Activated CD4-positive, alpha-beta memory T cell treated with anti-CD3 and anti-CD28 coated beads, Interleukin-2, amount 10 ng/mL, durations not matched to agents 7 days and 5 days (primary cell): ENCODE measurements at regions of chr11 and their contacts with region 1.

Region 1: DNA sequence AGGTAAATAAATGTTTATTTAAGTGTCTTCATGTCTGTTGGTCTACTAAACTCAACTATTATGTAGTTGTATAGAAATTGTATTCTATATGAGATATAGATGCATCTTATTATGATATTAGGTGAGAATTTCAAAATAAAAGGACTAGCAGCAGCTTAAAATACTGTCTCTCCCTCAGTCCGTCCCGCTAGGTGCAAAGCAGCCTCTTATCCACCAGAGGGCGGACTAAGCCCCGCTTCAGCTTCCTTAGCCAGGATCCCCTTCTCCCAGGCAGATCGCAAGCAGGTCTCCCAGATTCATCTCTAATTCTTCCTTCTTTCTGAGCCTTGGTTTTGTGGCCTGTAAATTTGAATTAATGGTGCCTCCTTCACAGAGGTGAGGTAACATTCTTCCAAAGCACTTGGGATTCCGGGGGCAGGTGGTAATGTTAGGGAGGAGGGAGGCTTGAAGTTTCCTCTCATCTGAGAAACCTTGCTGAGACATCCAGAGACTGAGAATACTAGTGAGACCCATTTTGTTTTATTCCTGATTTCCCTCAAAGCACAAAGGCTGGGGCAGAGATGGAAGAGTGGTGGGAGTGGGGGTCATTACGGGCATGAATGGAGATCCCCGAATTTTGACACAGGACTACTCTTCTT is 13.5 kb upstream of the INSC start:
- DNase-seq: peak; percentile 62
- H3K4me3 Mint-ChIP-seq: no peak overlapping the region
- H3K27ac Mint-ChIP-seq: no peak overlapping the region
- H3K4me1 Mint-ChIP-seq: peaks cover 2% of the 10 kb centered on the region
- H3K27me3 Mint-ChIP-seq: peaks cover 33% of the 10 kb centered on the region

Region 2: DNA sequence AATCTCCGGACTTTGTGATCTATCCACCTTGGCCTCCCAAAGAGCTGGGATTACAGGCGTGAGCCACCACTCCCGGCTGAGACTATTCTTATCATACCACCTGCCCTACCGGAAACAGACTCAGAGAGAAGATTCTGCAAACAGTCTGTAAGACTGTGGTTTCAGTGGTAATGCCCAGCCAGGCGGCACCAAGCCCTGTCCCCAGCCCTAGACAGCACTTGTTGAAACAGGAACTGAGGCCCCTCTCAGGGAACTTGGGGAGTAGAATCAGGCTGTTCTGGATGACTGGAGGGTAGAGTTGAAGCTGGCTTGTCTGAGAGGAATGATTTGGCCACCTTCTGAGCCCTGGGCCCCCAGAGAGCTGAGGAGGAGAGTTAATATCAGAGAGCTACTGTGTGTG is 12.2 kb after region 1 on chr11:
- CTCF ChIA-PET with region 1: interaction called, 12 read pairs
- POLR2A ChIA-PET with region 1: no interaction called
- DNase-seq: peak; percentile 28
- H3K4me3 Mint-ChIP-seq: no peak overlapping the region
- H3K27ac Mint-ChIP-seq: no peak overlapping the region
- H3K4me1 Mint-ChIP-seq: peaks cover 24% of the 10 kb centered on the region
- H3K27me3 Mint-ChIP-seq: peaks cover 25% of the 10 kb centered on the region

Region 3: DNA sequence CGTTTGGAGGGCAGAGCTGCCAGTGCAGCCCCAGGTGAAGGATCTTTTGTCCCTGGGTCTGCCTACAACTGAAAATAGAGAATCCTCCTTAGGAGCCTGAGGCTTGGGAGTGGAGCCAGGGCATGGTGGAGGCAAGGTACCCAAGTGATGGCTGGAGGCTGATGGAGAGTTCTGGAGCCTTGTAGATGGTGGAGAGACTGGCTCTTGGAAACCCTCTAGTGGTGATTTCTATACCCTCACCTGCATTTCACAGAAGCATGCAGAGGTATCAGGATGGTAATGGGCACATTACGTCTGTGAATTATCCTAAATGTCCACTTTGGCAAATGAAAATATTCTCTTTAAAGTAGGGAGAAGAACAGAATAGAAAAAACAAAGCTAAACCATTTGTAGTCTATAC is 57.9 kb after region 1 on chr11:
- CTCF ChIA-PET with region 1: interaction called, 30 read pairs
- POLR2A ChIA-PET with region 1: no interaction called
- DNase-seq: no peak
- H3K4me3 Mint-ChIP-seq: no peak overlapping the region
- H3K27ac Mint-ChIP-seq: no peak overlapping the region
- H3K4me1 Mint-ChIP-seq: no peaks in the 10 kb centered on the region
- H3K27me3 Mint-ChIP-seq: peaks cover 13% of the 10 kb centered on the region

Region 4: DNA sequence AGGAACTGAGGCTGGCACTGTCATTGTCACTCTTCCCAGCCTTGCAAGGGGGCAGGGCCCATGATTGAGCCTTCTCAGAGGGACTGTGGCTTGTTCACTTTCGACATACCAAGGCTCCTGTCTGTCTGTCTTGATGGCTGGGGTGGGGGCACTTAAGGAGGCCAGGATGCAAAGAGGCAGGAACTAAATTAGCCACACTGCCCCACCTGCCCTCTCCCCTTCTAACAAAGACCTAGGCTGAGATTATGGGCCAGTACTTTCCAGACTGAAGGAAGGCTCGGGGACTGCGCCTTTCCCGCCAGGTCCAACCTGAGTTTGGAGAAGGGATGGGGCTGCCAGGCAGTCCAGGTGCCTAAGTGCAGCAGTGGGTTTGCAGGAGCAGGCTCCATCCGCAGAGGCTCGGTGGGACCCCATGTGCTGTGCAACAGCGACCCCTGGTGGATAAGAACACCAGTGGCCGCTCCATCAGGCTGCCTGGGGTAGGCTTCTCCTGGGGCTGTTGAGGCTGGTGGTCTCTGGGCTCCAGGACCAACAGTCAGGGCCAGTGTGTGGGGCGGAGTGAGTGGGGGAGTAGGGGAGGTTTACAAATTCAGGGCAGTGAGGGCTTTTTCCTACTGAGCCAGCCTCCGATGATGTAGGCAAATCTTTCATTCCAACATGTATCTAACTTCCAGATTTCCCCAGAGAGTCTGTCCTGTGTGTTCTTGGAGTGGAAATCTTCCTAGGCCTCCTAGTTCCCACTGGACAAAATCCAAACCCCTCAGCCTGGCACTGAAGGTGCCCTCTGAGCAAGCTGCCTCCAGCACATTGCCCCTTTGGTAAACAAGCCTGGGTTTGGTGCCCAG is 107.4 kb after region 1 on chr11:
- CTCF ChIA-PET with region 1: interaction called, 25 read pairs
- POLR2A ChIA-PET with region 1: no interaction called
- DNase-seq: peak; percentile 78
- H3K4me3 Mint-ChIP-seq: no peak overlapping the region
- H3K27ac Mint-ChIP-seq: no peak overlapping the region
- H3K4me1 Mint-ChIP-seq: no peaks in the 10 kb centered on the region
- H3K27me3 Mint-ChIP-seq: peaks cover 7% of the 10 kb centered on the region